Adrenal gland (tissue), 19 donors: ENCODE measurements at regions of chr3 and their contacts with region 1.

Region 1: GRCh38 chr3:183472155-183472554 is 43.7 kb upstream of the MCF2L2 start:
- DNase-seq: peak in 1 of 7 donors; percentile 21
- H3K4me3 ChIP-seq: no peak overlapping the region
- H3K27ac ChIP-seq: no peak overlapping the region
- H3K4me1 ChIP-seq: peaks cover 5% of the 10 kb centered on the region in 2 donors
- H3K27me3 ChIP-seq: no peaks in the 10 kb centered on the region
- CTCF ChIP-seq: no peak
- POLR2A ChIP-seq: no peak

Region 2: GRCh38 chr3:183178629-183179549 is 293.3 kb before region 1 on chr3:
- intact Hi-C with region 1: no loop called
- DNase-seq: peak in 1 of 7 donors; percentile 27
- H3K4me3 ChIP-seq: peak overlapping the region in 2 of 4 donors; percentile 12 to 52
- H3K27ac ChIP-seq: no peak overlapping the region
- H3K4me1 ChIP-seq: no peaks in the 10 kb centered on the region
- H3K27me3 ChIP-seq: no peaks in the 10 kb centered on the region
- CTCF ChIP-seq: no peak
- POLR2A ChIP-seq: no peak

Region 3: DNA sequence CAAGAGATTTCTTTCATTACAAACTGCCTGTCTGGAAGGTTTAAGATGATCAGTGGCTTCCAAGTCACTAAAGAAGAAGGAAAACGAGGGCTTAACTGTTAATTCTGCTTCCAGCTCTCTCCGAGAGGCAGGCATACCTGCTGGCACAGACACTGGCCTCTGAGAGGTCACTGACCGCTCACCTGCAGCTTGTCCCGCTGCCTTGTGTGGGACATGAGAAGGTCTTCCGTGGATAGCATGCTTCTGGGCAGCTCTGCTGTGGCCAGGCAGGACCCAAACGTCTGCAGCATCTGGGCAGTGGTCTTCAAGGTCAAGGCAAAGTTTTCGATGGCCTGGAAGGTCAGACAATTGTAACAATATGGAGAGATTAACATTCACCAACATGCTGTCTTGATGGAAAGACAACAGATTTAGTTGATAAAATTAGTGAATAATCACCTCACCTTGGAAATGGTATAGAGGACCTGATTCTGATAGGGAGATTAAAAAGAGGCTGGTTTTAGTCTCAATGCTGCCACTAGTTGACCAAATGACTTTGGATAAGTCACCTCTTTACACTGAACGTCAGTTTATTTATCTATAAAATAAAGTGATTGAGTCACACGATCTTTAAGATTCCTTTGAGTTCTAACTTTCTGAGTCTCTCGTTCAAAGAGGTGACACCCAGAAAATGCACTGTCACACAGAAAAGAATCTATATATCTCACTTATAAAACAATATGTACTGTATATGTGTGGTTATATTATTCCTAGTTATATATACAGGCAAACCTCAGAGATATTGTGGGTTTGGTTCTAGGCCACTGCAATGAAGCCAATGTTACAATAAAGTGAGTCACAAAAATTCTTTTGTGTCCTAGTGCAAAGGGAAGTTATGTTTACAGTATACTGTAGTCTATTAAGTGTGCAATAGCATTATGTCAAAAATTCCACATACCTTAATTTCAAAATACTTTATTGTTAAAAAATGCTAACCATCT is 154.0 kb before region 1 on chr3:
- intact Hi-C with region 1: no loop called
- DNase-seq: no peak
- H3K4me3 ChIP-seq: no peak overlapping the region
- H3K27ac ChIP-seq: no peak overlapping the region
- H3K4me1 ChIP-seq: no peaks in the 10 kb centered on the region
- H3K27me3 ChIP-seq: no peaks in the 10 kb centered on the region
- CTCF ChIP-seq: no peak
- POLR2A ChIP-seq: no peak

Region 4: GRCh38 chr3:183766745-183767606 is 294.8 kb after region 1 on chr3:
- intact Hi-C with region 1: loop called in 1 of 2 experiments (anchors 5 kb)
- DNase-seq: peak; percentile 78 to 94 (median 85)
- H3K4me3 ChIP-seq: no peak overlapping the region
- H3K27ac ChIP-seq: no peak overlapping the region
- H3K4me1 ChIP-seq: peaks cover 0 to 17% of the 10 kb centered on the region in 2 donors
- H3K27me3 ChIP-seq: no peaks in the 10 kb centered on the region
- CTCF ChIP-seq: peak; percentile 77 to 89 (median 87)
- POLR2A ChIP-seq: no peak

Region 5: GRCh38 chr3:184050217-184050847 is 578.2 kb after region 1 on chr3:
- intact Hi-C with region 1: no loop called
- DNase-seq: no peak
- H3K4me3 ChIP-seq: no peak overlapping the region
- H3K27ac ChIP-seq: no peak overlapping the region
- H3K4me1 ChIP-seq: no peaks in the 10 kb centered on the region
- H3K27me3 ChIP-seq: no peaks in the 10 kb centered on the region
- CTCF ChIP-seq: no peak
- POLR2A ChIP-seq: no peak